Activated CD8-positive, alpha-beta T cell treated with anti-CD3 and anti-CD28 coated beads for 36 hours (primary cell): ENCODE measurements at regions of chr17 and their contacts with region 1.

Region 1: DNA sequence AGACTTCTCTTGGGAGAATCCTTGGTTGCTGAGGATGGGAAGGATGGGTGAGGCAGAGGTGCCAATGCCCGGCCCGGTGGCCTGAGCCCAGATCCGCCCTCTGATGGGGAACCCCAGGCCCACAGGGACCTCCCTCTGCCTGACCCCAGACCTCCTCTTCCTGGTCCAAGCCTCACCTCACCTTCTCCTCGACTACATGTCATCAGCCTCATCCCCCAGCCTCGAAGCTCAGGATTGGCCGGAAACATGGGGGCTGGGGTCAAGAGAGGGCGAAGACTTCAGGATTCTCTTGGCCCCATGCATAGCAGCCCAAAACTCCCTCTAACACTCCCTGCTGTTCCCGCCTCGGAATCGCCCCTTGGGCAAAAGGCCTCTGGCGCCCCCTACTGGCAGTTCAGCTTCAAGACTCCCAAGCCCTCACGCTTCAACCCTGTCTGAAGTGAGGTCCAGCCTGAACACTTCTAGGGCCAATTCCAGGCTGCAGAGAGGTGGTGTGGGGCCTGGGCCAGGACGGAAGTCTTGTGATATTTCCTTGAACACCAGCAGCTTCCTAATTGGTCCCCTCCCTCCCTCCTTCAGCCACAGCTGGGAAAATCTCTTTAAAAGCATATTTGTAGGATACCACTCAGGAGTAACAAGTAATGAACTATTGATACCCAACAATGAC is 47.2 kb downstream of the ARHGAP27 start:
- DNase-seq: peak; percentile 92
- ATAC-seq: peak; percentile 86
- H3K4me3 Mint-ChIP-seq: no peak overlapping the region
- H3K27ac Mint-ChIP-seq: peak overlapping the region; percentile 74
- H3K4me1 Mint-ChIP-seq: peaks cover 27% of the 10 kb centered on the region
- H3K27me3 Mint-ChIP-seq: peaks cover 11% of the 10 kb centered on the region
- CTCF ChIP-seq: peak; percentile 97

Region 2: DNA sequence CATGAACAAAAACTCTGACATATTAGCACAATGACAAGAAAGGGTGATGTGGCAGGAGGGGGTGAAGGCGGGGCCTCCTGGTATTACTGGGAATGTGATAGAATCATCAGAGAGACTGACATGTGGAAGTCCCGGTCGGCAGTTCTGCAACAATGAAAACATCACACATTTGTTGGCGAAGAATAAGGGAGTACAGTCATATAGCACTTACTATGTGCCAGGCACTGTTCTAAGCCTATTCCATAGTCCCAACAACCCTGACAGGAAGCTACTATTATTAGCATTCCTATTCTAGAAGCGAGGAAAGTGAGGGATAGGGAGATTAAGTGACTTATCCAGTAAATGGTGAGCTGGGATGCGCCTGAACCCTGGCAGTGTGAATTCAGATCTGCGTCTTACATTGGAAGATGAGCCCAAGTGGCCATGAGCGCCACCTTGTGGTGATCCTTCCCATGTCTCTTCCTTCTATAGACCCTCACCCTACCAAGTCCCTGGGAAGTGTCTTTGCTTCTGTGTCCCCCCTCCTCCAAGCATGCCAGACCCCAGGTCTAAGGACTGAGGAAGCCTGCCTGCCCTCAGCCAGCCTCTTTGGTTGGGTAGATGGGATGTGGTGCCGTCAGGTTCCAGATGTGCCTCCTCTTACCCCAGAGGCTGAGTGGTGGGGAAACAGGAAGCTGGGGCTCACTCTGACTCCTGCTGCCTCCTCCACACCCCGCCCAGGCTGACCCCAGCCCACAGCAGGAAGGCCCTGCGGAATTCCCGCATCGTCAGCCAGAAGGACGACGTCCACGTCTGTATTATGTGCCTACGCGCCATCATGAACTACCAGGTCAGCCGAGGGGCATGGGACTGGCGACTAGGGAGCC is 149.8 kb before region 1 on chr17:
- CTCF ChIA-PET with region 1: interaction called, 14 read pairs
- POLR2A ChIA-PET with region 1: no interaction called
- intact Hi-C with region 1: no loop called
- DNase-seq: peak; percentile 92
- ATAC-seq: peak; percentile 63
- H3K4me3 Mint-ChIP-seq: no peak overlapping the region
- H3K27ac Mint-ChIP-seq: peak overlapping the region; percentile 99
- H3K4me1 Mint-ChIP-seq: peaks cover 55% of the 10 kb centered on the region
- H3K27me3 Mint-ChIP-seq: no peaks in the 10 kb centered on the region
- CTCF ChIP-seq: peak; percentile 76

Region 3: GRCh38 chr17:45277216-45277849 is 108.1 kb before region 1 on chr17:
- CTCF ChIA-PET with region 1: interaction called, 270 read pairs
- POLR2A ChIA-PET with region 1: interaction called, 7 read pairs
- intact Hi-C with region 1: loop called (anchors 1 kb)
- DNase-seq: peak; percentile 98
- ATAC-seq: peak; percentile 95
- H3K4me3 Mint-ChIP-seq: no peak overlapping the region
- H3K27ac Mint-ChIP-seq: peak overlapping the region; percentile 53
- H3K4me1 Mint-ChIP-seq: peaks cover 15% of the 10 kb centered on the region
- H3K27me3 Mint-ChIP-seq: no peaks in the 10 kb centered on the region
- CTCF ChIP-seq: peak; percentile 78

Region 4: GRCh38 chr17:45293413-45294211 is 91.9 kb before region 1 on chr17:
- CTCF ChIA-PET with region 1: interaction called, 22 read pairs
- POLR2A ChIA-PET with region 1: interaction called, 3 read pairs
- intact Hi-C with region 1: no loop called
- DNase-seq: peak; percentile 47
- ATAC-seq: peak; percentile 69
- H3K4me3 Mint-ChIP-seq: no peak overlapping the region
- H3K27ac Mint-ChIP-seq: peak overlapping the region; percentile 84
- H3K4me1 Mint-ChIP-seq: peaks cover 76% of the 10 kb centered on the region
- H3K27me3 Mint-ChIP-seq: no peaks in the 10 kb centered on the region
- CTCF ChIP-seq: no peak

Region 5: DNA sequence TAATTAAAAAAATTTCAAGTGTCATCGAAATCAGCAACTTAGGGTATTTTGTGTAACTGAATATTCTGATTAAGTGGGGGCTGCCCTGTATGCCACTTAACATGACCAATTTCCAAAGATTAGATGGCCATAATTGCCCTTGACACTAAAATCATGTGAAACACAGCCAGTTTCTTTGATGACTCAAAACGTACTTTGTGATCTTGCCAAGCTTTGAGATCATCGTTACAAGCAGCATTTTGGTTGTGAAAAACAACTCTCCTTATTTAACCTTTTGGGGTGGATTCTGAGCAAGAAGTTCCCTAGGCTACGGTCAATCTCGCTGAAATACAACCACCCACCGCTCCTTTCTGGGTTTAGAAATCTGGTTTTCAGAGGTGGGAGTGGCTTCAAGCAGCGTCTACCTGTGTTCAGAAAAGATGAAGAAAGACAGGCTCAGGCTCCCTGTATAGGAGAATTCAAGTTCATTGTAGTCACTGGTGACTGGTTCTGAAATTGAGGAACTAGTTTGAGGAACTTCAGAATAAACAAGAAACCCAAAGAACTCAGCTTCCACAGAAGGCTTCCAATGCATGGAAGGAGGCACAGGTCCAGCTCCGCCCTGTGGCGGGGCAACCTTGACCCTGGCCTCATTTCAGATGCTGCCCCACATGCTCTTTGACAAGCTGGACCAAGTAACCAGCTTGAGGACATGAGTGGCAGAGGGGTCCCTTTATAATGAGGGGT is 78.0 kb before region 1 on chr17:
- CTCF ChIA-PET with region 1: interaction called, 18 read pairs
- POLR2A ChIA-PET with region 1: interaction called, 14 read pairs
- intact Hi-C with region 1: no loop called
- DNase-seq: peak; percentile 81
- ATAC-seq: peak; percentile 58
- H3K4me3 Mint-ChIP-seq: peak overlapping the region; percentile 36
- H3K27ac Mint-ChIP-seq: peak overlapping the region; percentile 95
- H3K4me1 Mint-ChIP-seq: peaks cover 83% of the 10 kb centered on the region
- H3K27me3 Mint-ChIP-seq: no peaks in the 10 kb centered on the region
- CTCF ChIP-seq: no peak

Region 6: GRCh38 chr17:45325810-45326209 is 59.7 kb before region 1 on chr17:
- CTCF ChIA-PET with region 1: interaction called, 16 read pairs
- POLR2A ChIA-PET with region 1: no interaction called
- intact Hi-C with region 1: no loop called
- DNase-seq: no peak
- ATAC-seq: no peak
- H3K4me3 Mint-ChIP-seq: no peak overlapping the region
- H3K27ac Mint-ChIP-seq: no peak overlapping the region
- H3K4me1 Mint-ChIP-seq: peaks cover 21% of the 10 kb centered on the region
- H3K27me3 Mint-ChIP-seq: no peaks in the 10 kb centered on the region
- CTCF ChIP-seq: no peak